ENCODE measurements at regions of chr5 and their contacts with region 1.

Region 1: DNA sequence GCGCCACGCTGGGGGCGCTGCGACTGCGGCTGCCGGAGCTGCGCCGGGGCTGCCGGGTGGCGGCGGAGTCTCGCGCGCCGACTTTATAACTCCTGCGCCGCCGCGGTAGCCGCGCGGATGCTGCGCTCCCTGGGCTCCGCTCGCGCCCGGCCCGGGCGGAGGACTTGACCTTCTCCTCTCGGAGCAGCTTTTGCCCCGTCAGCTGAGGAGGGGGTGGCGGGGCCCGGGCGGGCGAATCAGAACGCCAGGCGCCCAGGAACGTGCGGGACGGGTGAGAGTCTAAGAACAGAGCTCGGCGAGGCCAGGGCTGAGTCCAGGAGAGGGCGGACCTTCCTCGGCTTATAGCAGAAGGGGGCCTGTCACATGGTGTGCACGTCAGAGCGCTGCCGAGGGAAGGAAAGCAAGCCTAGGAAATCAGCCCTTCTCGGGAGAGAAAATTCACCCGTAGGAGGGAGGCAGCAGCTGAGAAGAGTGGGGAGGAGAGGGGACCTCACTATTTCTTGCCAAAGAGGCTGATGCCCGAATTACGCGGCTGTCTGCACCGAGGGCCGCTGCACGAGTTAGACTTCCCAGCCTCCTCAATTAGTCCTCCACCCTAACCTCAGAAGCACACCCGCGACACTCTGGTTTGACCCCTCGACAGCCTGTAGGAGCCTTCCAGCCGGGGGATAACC is at the start of gene FOXD1:
- DNase-seq: peak; percentile 96
- ATAC-seq: peak; percentile 97
- total RNA-seq, gene FOXD1: 99.3 TPM

Region 2: DNA sequence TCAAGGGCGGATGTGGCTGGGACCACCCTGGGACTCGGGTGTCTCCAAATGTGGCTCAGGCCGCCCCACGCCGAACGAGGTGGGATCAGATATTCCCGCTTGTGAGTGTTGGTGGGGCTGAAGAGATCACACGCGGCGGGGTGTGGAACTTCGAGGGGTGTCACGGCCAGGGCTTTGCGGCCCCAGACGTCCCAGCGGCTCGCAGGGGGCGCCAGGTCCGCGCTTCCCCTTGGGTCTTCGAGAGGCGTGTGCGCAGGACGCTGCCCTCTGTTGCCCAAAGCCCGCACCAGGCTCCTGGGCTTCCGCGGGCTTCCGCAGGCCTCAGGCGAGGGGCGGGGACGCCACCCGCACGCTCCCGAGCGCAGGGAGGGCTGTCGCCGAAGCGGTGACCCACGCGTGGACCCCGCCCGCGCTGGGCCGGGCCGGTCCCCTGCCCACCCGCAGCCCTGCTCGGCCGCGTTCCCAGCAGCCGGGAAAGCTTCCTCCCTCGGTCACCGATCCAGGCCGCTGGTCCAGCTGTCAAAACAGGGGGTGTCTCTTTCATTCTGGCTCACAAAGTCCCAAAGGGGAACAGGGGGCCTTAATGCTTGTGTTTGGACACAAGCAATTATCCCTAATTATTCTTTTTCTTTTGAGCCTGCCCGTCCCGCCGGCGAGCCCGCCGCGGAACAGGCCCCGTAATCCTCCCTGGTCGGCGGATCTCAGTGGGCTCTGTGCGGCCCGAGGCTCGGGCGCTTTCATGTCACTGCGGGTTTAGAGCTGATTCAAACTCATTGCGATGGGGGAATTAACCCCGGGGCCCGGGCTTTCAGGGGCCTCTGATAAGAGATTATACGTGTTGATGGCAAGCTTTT is 215.0 kb before region 1 on chr5:
- intact Hi-C with region 1: loop called (anchors 10 kb)
- DNase-seq: peak; percentile 77
- ATAC-seq: peak; percentile 51

Region 3: DNA sequence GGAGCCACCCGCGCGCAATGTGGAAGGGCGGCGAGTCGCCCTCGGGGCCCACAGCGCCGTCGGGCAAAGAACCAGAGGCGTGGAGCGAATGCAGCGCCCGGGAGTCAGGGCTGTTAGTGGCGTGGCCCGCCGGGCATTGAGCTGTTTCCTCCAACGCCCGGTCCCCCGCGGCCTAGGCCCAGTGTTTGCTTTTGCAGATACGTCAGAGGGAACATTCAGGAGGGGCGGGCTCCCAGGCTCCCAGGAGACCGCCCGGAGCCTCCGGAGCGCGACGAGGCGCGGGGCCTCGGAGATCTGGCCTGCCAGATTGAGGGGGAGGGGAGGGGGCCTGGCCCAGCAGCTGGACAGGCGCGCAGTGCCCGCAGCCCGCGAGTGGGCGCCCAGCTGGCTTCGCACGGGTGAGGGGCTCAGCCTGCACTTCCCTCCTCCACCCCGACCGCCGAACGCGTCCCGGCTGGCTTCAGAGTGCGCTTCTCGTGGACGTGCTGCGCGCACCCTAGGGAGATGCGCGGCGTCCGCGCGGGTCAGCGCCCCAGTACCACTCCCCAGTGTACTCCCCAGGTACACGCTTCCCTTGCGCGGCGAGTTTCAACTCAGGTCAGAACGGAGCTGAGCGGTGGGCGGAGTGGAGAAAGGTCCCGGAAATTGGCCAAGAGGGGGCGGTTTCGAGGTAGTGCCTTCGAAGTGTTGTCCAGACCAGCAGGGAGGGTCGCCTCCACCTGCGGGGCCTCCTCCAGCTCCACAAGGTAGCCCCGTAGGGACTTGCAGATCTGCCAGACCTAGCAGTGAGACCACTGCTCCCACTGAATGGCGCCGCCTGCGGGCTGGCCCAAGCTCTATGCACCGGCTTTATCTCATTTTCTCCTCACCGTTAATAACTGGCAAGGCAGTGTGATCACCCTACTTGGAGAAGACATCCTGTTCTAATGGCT is 145.2 kb before region 1 on chr5:
- intact Hi-C with region 1: loop called (anchors 5 kb)
- DNase-seq: peak; percentile 67
- ATAC-seq: peak; percentile 19

Region 4: GRCh38 chr5:73498057-73499008 is 49.7 kb after region 1 on chr5 and contains the start of gene BTF3:
- intact Hi-C with region 1: no loop called
- DNase-seq: peak; percentile 97
- ATAC-seq: peak; percentile 99
- total RNA-seq, gene BTF3: 508 TPM